Activated CD4-positive, alpha-beta T cell treated with anti-CD3 and anti-CD28 coated beads, Interleukin-2, amount 10 ng/mL, durations not matched to agents 24 days and 14 days (primary cell): ENCODE measurements at regions of chr1 and their contacts with region 1.

Region 1: DNA sequence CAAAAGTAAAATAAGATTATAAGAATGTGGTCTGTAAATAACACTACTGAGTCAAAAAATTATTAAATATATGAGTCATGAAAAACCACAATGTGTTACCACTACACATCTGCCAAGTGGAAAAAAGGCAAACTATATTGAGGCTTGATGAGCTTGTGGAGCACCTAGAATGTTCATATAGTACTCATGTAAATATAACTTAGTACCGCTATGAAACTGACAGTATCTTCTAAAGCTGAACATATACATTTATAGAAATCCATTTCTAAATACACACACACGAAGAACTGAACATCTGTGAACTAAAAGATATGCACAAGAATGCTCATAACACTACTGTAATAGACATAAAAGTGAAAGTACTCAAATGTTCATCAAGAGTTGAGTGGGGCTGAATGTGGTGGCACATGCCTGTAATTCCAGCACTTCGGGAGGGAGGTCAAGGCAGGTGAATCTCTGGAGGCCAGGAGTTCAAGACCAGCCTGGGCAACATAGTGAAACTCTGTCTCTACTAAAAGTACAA is 18.5 kb upstream of the GBP3 start:
- DNase-seq: peak; percentile 66
- H3K4me3 Mint-ChIP-seq: peak overlapping the region; percentile 59
- H3K27ac Mint-ChIP-seq: peak overlapping the region; percentile 82
- H3K4me1 Mint-ChIP-seq: peaks cover 32% of the 10 kb centered on the region
- H3K27me3 Mint-ChIP-seq: peaks cover 10% of the 10 kb centered on the region

Region 2: GRCh38 chr1:88683541-88684481 is 357.4 kb before region 1 on chr1 and contains the start of gene PKN2:
- intact Hi-C with region 1: loop called (anchors 10 kb)
- DNase-seq: peak; percentile 99
- H3K4me3 Mint-ChIP-seq: peak within 1 kb of the TSS; percentile 86
- H3K27ac Mint-ChIP-seq: peak within 1 kb of the TSS; percentile 95
- H3K4me1 Mint-ChIP-seq: peaks cover 21% of the 10 kb centered on the region
- H3K27me3 Mint-ChIP-seq: peaks cover 2% of the 10 kb centered on the region
- total RNA-seq, gene PKN2: 24.1 and 25.1 TPM in 2 replicates

Region 3: GRCh38 chr1:88998716-88999115 is 42.5 kb before region 1 on chr1:
- intact Hi-C with region 1: loop called (anchors 2 kb)
- DNase-seq: peak; percentile 85
- H3K4me3 Mint-ChIP-seq: no peak overlapping the region
- H3K27ac Mint-ChIP-seq: no peak overlapping the region
- H3K4me1 Mint-ChIP-seq: peaks cover 30% of the 10 kb centered on the region
- H3K27me3 Mint-ChIP-seq: no peaks in the 10 kb centered on the region

Region 4: GRCh38 chr1:89065079-89065868 is 24.1 kb after region 1 on chr1 and contains the start of gene GBP1:
- intact Hi-C with region 1: loop called (anchors 2 kb)
- DNase-seq: peak; percentile 79
- H3K4me3 Mint-ChIP-seq: peak within 1 kb of the TSS; percentile 96
- H3K27ac Mint-ChIP-seq: peak within 1 kb of the TSS; percentile 96
- H3K4me1 Mint-ChIP-seq: peaks cover 59% of the 10 kb centered on the region
- H3K27me3 Mint-ChIP-seq: no peaks in the 10 kb centered on the region
- total RNA-seq, gene GBP1: 36.9 and 38.3 TPM in 2 replicates

Region 5: DNA sequence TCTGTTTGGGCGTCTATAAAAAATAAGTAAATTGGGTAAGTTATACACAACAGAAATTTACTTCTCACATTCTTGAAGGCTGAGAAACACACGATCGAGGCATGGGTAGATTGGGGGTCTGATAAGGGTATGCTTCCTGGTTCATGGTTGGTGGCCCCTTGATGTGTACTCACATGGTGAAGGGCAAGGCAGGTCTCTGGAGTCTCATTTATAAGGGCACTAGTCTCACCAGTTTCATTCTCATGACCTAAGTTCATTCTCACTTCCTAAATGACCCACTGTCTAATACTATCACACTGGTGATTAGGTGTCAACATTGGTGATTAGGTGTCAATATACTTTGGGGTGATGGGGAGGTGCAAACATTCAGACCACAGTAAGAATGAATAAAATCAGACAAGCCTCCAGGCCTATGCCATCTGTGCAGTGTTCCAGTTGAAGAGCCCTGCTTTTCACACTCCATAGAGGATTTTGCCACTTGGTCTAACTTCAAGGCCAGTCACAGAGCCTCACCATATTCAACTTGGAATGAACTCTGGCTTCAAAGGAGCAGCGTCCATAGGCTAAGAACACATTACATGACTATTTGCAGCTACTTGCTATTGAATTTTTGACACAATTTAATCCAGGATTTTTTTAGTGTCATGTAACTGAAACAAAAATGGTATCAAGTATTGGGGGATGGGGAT is 160.1 kb after region 1 on chr1:
- intact Hi-C with region 1: no loop called
- DNase-seq: no peak
- H3K4me3 Mint-ChIP-seq: peak overlapping the region; percentile 36
- H3K27ac Mint-ChIP-seq: peak overlapping the region; percentile 78
- H3K4me1 Mint-ChIP-seq: peaks cover 46% of the 10 kb centered on the region
- H3K27me3 Mint-ChIP-seq: no peaks in the 10 kb centered on the region

Region 6: GRCh38 chr1:89274411-89274857 is 233.3 kb after region 1 on chr1:
- intact Hi-C with region 1: loop called (anchors 1 kb)
- DNase-seq: peak; percentile 85
- H3K4me3 Mint-ChIP-seq: peak overlapping the region; percentile 99
- H3K27ac Mint-ChIP-seq: peak overlapping the region; percentile 96
- H3K4me1 Mint-ChIP-seq: peaks cover 64% of the 10 kb centered on the region
- H3K27me3 Mint-ChIP-seq: no peaks in the 10 kb centered on the region

Region 7: DNA sequence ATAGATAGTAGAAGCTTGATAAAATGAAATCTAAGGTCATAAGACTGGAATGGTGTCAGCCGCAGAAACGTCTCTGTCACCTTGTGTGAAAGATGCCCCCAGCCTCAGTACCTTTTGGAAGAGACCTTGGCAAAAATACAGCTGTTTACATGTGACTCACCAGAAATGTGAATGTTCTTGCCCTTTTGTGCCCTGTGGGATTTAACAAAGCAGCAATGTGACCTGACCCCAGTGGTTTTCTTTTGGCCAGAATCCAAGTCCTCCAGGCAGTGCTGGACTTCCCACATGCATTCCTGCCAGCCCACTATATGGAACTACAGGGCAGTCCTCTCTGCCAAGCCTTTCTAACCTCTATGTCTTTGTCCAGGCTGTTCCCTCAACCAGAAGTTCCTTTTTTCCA is 564.5 kb after region 1 on chr1:
- intact Hi-C with region 1: loop called (anchors 10 kb)
- DNase-seq: no peak
- H3K4me3 Mint-ChIP-seq: peak overlapping the region; percentile 64
- H3K27ac Mint-ChIP-seq: peak overlapping the region; percentile 99
- H3K4me1 Mint-ChIP-seq: peaks cover 86% of the 10 kb centered on the region
- H3K27me3 Mint-ChIP-seq: no peaks in the 10 kb centered on the region